Activated B cell treated with CpG ODN at 0.5 μM for 24 hours (primary cell): ENCODE measurements at regions of chr20 and their contacts with region 1.

Region 1: DNA sequence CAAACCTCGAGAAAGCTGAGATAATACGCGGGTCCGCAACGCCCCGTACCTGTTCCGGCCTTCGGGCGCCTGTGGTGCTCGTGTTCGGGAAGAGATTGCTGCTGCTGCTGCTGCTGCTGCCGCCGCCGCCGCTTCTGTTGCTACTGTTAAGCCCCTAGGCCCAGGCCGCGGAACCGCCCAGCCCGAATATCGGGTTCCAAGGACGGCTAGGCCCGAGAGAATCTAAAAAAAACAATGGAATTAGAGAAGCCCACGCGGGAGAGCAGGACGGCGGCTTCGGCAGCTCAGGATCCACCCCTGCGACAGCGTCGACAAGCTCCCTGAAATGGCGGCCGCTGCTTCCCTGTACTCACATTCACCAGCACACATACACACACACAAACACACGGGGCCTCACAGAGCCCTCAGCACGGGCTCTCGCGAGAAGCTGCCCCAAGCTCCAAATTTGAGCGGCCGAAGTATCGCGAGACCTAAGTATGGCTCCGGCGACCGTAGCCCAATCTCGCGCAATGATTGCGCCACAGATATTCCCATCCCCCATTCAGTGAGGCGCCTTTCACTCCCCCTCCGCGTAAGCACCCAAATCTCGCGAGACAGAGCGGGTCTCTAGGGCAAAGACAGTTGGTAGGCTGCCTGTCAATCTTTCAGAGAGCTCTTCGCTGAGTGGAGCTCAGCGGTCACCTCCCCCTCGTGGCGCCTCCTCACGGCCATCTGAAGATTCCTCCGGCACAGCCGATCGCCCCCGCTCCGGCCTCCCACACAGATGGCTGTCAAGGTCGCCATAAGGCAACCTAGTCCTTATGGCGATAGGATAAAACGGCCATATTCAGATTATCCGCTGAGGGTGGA is at the start of gene RBM39:
- DNase-seq: peak; percentile 94
- ATAC-seq: peak; percentile 81
- H3K4me3 Mint-ChIP-seq: peak within 1 kb of the TSS; percentile 99
- H3K27ac Mint-ChIP-seq: peak within 1 kb of the TSS; percentile 99
- H3K4me1 Mint-ChIP-seq: peaks cover 46% of the 10 kb centered on the region
- H3K27me3 Mint-ChIP-seq: no peaks in the 10 kb centered on the region
- CTCF ChIP-seq: no peak
- total RNA-seq, gene RBM39: 432 and 483 TPM in 2 replicates

Region 2: GRCh38 chr20:35063168-35063567 is 678.9 kb before region 1 on chr20:
- CTCF ChIA-PET with region 1: no interaction called
- POLR2A ChIA-PET with region 1: interaction called, 10 read pairs
- intact Hi-C with region 1: no loop called
- DNase-seq: no peak
- ATAC-seq: no peak
- H3K4me3 Mint-ChIP-seq: no peak overlapping the region
- H3K27ac Mint-ChIP-seq: no peak overlapping the region
- H3K4me1 Mint-ChIP-seq: peaks cover 39% of the 10 kb centered on the region
- H3K27me3 Mint-ChIP-seq: no peaks in the 10 kb centered on the region
- CTCF ChIP-seq: no peak

Region 3: DNA sequence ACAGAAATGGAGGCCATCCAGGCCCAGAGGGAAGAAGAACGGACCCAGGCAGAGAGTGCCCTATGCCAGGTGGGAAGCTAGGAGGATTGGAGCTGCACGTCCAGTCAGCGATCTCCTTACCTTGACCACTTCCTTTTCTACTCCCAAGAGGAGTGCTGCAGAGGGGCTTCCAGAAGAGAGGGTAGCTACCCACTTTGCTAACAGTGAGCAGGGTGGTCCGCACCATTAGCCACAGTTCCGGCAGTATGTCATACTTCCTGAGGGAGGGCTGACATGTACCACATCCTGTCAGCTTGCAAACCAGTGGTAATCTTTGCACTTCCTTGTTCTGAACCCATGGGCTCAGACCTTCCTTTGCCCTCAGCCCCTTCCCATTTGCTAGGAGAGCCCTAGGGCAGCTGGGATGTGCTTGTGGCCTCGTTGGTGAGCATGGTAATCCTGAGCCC is 251.4 kb before region 1 on chr20:
- CTCF ChIA-PET with region 1: no interaction called
- POLR2A ChIA-PET with region 1: interaction called, 25 read pairs
- intact Hi-C with region 1: loop called (anchors 1 kb)
- DNase-seq: peak; percentile 44
- ATAC-seq: peak; percentile 99
- H3K4me3 Mint-ChIP-seq: peak overlapping the region; percentile 98
- H3K27ac Mint-ChIP-seq: peak overlapping the region; percentile 98
- H3K4me1 Mint-ChIP-seq: peaks cover 45% of the 10 kb centered on the region
- H3K27me3 Mint-ChIP-seq: no peaks in the 10 kb centered on the region
- CTCF ChIP-seq: no peak

Region 4: DNA sequence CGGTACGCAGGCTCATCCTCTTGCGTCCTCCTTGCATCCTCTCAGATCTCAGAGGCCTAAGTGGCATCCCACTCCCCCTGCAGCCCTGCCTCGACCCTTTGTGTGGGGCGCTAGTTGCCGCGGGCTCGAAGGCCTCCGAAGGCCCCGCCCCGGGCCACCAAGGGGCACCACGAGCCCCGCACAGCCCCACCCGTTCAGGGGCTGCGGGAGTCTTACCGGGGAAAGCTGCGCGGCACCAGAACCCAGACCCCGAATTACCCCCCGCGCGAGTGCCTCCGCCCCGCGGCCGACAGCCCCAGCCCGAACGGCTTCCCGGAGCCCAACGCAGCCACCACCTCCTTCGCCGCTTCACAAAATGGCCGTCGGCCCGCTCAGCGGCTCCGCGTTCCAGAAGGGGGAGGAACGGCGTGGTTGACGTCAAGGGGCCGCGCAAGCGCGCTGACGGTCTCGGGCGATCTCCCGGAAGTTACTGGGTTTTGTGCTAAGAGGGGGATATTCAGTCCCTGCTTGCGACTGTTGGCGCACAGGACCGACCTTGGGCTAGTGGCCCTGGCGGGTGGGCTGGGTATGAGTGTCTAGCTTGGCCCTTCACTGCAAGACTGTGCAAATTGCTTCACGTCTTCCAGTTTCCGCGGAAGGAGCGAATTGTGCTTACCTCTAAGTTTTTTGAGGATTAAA is 77.4 kb before region 1 on chr20 and contains the starts of genes CPNE1 and RBM12:
- CTCF ChIA-PET with region 1: no interaction called
- POLR2A ChIA-PET with region 1: interaction called, 95 read pairs
- intact Hi-C with region 1: loop called (anchors 1 kb)
- DNase-seq: peak; percentile 94
- ATAC-seq: peak; percentile 77
- H3K4me3 Mint-ChIP-seq: peak within 1 kb of the TSS; percentile 94
- H3K27ac Mint-ChIP-seq: peak within 1 kb of the TSS; percentile 99
- H3K4me1 Mint-ChIP-seq: peaks cover 48% of the 10 kb centered on the region
- H3K27me3 Mint-ChIP-seq: no peaks in the 10 kb centered on the region
- CTCF ChIP-seq: no peak
- total RNA-seq, gene CPNE1: 234 and 264 TPM in 2 replicates
- total RNA-seq, gene RBM12: 129 and 139 TPM in 2 replicates

Region 5: DNA sequence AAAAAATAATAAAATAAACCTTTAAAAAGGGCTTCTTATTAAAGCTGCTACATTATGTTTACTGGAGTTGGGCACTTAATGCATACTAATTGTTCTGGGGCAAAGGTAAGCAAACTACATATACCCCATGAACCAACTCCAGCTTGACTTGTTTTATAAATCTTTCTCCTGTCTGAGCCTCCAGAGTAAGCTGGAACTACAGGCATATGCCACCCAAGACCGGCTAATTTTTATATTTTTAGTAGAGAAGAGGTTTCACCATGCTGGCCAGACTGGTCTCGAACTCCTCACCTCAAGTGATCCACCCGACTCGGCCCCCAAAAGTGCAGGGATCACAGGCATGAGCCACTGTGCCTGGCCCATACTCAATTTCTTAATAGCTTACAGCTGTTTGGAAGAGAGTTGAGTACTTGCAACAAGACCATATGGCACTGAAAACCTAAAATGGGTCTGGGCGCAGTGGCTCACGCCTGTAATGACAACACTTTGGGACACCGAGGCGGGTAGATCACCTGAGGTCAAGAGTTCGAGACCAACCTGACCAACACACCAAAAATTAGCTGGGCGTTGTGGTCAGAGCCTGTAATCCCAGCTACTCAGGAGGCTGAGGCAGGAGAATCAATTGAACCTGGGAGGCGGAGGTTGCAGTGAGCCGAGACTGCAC is 23.0 kb before region 1 on chr20:
- CTCF ChIA-PET with region 1: no interaction called
- POLR2A ChIA-PET with region 1: interaction called, 22 read pairs
- intact Hi-C with region 1: no loop called
- DNase-seq: no peak
- ATAC-seq: no peak
- H3K4me3 Mint-ChIP-seq: no peak overlapping the region
- H3K27ac Mint-ChIP-seq: no peak overlapping the region
- H3K4me1 Mint-ChIP-seq: peaks cover 9% of the 10 kb centered on the region
- H3K27me3 Mint-ChIP-seq: no peaks in the 10 kb centered on the region
- CTCF ChIP-seq: no peak

Region 6: DNA sequence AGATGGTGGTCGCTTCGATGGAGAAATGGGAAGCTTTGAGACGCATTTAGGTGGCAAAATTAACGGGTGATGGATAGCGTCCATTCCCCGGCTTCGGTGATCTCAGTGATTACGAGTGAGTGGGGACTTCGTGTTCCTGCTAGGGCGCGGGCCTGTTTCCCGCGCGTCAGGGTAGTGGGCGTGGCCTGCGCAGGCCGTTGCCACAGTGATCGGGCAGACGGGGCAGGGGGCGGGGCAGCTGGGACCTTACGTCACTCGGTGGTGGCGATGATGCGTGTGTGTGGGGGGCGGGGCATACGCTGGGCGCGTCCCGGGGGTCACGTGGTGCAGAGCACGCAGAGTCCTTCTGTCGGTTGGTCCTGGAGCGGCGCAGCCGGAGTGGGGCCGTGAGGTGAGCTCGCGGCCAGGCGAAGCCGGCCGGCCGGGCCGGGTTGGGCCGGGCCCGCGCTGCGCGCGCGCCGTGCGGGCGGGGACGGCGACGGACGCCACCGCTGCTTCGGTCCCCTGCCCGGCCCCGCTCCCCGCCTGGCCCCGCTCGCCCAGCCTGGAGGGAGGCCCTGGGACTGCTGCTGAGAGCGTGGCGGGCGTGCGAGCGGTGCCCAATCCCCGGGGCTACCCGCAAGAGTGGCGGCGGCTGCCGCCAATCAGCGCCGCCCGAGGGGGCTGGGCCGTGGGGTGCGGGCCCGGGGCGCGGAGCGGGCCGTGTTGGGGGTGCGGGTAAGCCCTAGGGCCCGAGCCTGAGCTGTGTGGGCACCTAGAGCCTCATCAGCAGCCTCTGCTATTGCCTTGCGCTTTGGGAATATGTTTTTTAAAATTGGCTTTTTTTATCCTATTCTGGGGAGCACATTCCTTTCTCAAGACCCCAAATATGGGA is 29.8 kb after region 1 on chr20 and contains the start of gene PHF20:
- CTCF ChIA-PET with region 1: interaction called, 21 read pairs
- POLR2A ChIA-PET with region 1: interaction called, 764 read pairs
- intact Hi-C with region 1: loop called (anchors 1 kb)
- DNase-seq: peak; percentile 98
- ATAC-seq: peak; percentile 85
- H3K4me3 Mint-ChIP-seq: peak within 1 kb of the TSS; percentile 86
- H3K27ac Mint-ChIP-seq: peak within 1 kb of the TSS; percentile 95
- H3K4me1 Mint-ChIP-seq: peaks cover 79% of the 10 kb centered on the region
- H3K27me3 Mint-ChIP-seq: no peaks in the 10 kb centered on the region
- CTCF ChIP-seq: no peak
- total RNA-seq, gene PHF20: 72.3 and 86.0 TPM in 2 replicates